PC-9 (cell line): ENCODE measurements at regions of chr2 and their contacts with region 1.

Region 1: DNA sequence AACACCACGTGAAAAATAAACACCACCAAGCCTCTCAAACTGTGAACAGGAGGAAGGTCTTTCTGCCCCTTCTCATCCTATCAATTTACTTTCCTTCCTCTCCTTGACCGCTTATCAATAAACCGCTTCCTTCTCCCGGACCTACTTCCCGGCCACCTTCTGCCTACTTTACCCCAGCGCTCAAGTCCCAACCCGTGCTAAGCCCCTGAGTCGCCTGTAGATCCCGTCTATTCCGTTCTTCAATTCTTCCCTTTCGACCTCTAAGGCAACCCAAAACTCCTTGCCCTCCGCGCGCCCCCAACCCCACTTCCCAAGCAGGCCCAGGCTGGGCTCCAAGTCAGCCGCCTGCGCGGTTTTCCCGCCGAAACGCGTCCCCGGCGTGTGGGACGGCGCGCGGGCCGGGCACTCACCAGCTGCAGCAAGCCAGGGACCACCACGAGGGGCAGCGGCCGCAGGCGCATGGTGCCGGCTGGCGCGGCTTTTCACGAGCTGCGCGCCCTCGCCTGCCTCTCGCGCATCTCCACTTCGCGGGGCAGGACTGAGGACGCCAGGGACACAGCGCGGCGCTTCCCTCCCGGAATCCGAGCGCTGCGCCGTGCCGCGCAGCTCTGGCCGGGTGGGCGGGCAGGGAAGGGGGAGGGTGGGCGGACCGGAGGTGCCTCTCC is at the start of gene NXPH2:
- DNase-seq: no peak
- H3K4me3 ChIP-seq: no peak within 1 kb of the TSS
- H3K27ac ChIP-seq: no peak within 1 kb of the TSS
- H3K4me1 ChIP-seq: no peaks in the 10 kb centered on the region
- H3K27me3 ChIP-seq: no peaks in the 10 kb centered on the region
- CTCF ChIP-seq: no peak
- total RNA-seq, gene NXPH2: not detected in 2 replicates

Region 2: DNA sequence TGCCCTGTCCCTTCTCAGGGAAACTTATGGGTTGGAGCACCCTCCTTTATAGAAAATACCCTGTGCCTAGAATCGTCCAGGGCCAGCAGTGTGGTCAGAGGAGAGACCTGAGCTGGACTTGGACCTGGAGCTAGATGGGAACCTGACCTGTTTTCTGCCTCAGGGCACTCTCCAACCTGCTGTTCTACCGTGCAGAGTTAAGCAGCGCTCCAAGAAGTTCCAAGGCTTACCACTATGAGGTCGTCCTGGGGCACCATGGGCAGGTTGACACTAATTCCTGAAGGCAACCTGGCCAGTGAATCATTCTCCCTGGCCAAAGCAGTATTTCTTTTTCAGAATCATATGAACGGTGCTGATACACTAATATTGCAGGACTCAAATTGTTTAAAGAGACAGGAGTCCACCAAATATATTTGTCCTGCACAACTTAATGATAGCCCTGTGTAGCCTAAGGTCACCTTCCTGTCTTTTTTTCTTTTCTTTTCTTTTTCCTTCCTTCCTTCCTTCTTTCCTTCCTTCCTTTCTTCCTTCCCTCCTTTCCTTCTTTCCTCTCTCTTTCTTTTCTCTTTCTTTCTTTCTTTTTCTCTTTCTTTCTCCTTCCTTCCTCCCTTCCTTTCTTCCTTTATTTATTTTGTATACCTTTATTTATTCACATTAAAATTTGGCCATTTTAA is 1271.0 kb before region 1 on chr2:
- CTCF ChIA-PET with region 1: no interaction called
- POLR2A ChIA-PET with region 1: interaction called, 13 read pairs
- intact Hi-C with region 1: no loop called
- DNase-seq: no peak
- H3K4me3 ChIP-seq: no peak overlapping the region
- H3K27ac ChIP-seq: no peak overlapping the region
- H3K4me1 ChIP-seq: no peaks in the 10 kb centered on the region
- H3K27me3 ChIP-seq: 0 out of 2 replicates have a peak, but pooled peaks cover 4% of the 10 kb centered on the region
- CTCF ChIP-seq: no peak

Region 3: GRCh38 chr2:138722316-138722715 is 57.6 kb before region 1 on chr2:
- CTCF ChIA-PET with region 1: no interaction called
- POLR2A ChIA-PET with region 1: no interaction called
- intact Hi-C with region 1: no loop called
- DNase-seq: peak in 1 of 2 experiments; percentile 7
- H3K4me3 ChIP-seq: no peak overlapping the region
- H3K27ac ChIP-seq: no peak overlapping the region
- H3K4me1 ChIP-seq: no peaks in the 10 kb centered on the region
- H3K27me3 ChIP-seq: no peaks in the 10 kb centered on the region
- CTCF ChIP-seq: no peak

Region 4: DNA sequence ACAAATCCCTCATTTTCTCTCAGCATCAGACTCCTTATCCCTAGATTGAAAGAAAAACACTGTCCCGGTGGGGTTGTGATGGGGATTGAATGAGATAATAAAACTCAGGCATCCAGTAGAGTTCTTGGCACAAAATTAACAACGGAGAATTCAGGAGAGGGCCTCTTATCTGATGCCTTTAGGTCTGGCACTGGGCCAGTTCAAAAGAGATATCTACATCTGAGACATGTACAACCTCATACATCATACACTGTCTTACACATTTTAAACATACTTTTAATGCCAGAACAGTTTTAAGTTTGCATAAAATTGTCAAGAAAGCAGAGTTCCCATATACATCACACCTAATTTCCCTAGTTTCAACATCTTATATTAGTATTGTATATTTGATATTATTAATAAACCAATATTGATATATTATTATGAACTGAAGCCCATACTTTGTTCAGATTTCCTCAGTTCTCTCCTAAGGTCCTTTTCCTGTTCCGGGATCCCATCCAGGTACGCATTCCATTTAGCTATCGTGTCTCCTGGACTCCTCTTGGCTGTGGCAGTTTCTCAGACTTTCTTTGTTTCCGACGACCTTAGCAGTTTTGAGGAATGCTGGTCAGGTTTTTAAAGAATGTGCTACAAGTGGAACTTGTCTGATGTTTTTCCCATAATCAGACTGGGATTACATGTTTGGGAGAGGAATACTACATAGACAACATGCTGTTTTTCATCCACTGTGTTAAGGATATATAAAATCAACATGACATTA is 27.5 kb before region 1 on chr2:
- CTCF ChIA-PET with region 1: no interaction called
- POLR2A ChIA-PET with region 1: no interaction called
- intact Hi-C with region 1: loop called (anchors 1 kb)
- DNase-seq: peak in 1 of 2 experiments; percentile 53
- H3K4me3 ChIP-seq: no peak overlapping the region
- H3K27ac ChIP-seq: no peak overlapping the region
- H3K4me1 ChIP-seq: no peaks in the 10 kb centered on the region
- H3K27me3 ChIP-seq: no peaks in the 10 kb centered on the region
- CTCF ChIP-seq: no peak